Vagina (tissue), 2 donors: ENCODE measurements at regions of chr22 and their contacts with region 1.

Region 1: DNA sequence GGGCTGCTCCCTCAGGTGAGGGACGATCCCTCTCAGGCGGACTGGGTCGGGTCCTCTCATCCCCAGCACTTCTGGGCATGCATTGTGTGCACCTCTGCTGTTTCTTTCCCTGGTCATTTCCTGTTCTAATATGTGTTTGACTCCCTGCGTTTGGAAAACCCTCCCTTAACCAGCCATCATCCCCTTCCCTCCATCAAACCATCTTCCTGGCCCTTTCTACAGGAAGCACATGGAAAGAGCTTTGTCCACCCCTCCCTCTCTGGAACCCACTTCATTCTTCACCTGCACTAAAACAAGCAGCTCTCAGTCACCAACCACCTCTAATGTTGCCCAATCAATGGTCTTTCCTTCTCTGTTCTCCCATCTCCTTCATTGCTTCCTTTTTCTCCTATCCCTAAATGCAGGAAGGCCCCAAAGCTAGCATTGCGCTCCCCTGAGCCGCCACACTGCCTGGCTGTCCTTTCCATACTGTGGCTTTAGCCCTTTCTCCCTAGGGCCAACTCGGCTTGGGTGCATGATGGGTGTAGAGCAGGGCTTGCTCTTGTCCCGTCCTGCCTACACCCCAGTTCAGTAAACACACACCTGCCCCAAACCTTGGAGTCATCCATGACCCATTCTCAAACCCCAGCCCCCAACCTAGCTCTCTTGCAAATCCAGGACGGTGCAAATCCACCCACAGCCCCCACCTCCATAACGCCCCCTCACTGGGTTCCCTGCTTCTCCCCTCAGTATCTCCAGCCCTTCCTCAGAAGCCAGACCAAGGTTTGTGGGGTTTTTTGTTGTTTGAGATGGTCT is 5.4 kb upstream of the GAS2L1 start:
- DNase-seq: no peak
- H3K4me3 ChIP-seq: no peak overlapping the region
- H3K27ac ChIP-seq: no peak overlapping the region
- H3K4me1 ChIP-seq: no peaks in the 10 kb centered on the region
- H3K27me3 ChIP-seq: no peaks in the 10 kb centered on the region
- CTCF ChIP-seq: no peak
- POLR2A ChIP-seq: no peak

Region 2: DNA sequence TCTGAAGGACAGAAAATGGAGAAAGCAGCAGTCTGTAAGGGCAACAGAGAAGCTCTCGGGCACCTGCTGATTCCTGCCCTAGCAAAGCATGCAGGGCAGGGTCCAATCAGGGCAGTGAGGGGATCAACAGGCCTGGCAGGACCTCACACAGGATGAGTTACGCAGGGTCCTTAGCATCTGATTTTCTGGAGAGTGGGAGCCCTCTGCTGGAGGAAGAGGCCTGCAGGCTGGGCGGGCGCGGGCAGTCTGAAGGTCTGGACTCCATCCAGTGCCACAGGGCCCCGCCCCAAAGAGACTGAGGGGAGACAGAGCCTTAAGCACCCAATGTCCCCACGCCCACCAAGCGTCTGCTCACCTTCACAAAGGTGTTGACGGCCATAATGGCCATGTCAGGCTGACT is 58.5 kb after region 1 on chr22:
- intact Hi-C with region 1: loop called (anchors 2 kb)
- DNase-seq: no peak
- H3K4me3 ChIP-seq: no peak overlapping the region
- H3K27ac ChIP-seq: no peak overlapping the region
- H3K4me1 ChIP-seq: no peaks in the 10 kb centered on the region
- H3K27me3 ChIP-seq: no peaks in the 10 kb centered on the region
- CTCF ChIP-seq: peak in 1 of 3 experiments; percentile 31
- POLR2A ChIP-seq: no peak

Region 3: DNA sequence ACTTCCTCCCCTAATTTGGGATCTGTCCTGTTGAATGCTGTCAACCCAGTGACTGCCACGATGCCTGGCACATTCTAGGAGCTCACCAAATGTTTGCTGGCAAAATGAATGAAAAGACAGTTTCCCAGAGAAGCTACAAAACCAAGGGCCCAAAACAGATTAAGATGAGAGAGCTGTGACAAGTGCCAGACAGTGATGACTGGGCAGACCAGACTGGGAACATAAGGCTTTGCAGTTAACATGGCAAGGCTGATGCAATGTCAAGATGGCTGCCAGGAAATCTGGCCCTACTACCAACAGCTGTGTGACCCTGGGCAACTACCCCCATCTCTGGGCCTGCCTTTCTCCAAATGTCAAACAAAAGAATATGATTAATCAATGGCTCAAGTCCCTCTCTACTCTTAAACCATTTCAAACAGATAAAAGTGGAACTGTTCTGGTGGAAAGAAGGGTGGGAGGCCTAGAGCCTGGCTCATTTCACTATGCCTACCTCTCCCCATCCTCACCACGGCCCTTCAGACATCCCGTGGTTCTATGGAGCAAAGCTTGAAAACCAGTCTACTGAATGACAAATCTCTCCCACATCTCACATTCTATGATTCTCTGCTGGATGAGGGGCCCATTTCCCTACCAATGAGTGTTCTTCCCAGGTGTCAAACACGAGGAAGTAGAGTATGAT is 74.5 kb after region 1 on chr22:
- intact Hi-C with region 1: no loop called
- DNase-seq: no peak
- H3K4me3 ChIP-seq: no peak overlapping the region
- H3K27ac ChIP-seq: peak overlapping the region; percentile 22
- H3K4me1 ChIP-seq: peaks cover 31% of the 10 kb centered on the region
- H3K27me3 ChIP-seq: no peaks in the 10 kb centered on the region
- CTCF ChIP-seq: no peak
- POLR2A ChIP-seq: no peak